ENCODE measurements at regions of chr1 and their contacts with region 1.

Region 1: GRCh38 chr1:64823691-64824476 is 79.0 kb downstream of the RAVER2 start:
- DNase-seq: peak in 1 of 2 donors; percentile 80
- H3K4me3 ChIP-seq: no peak overlapping the region
- H3K27ac ChIP-seq: no peak overlapping the region
- H3K4me1 ChIP-seq: no peaks in the 10 kb centered on the region
- H3K27me3 ChIP-seq: no peaks in the 10 kb centered on the region
- CTCF ChIP-seq: peak; percentile 69 to 79 (median 78)

Region 2: DNA sequence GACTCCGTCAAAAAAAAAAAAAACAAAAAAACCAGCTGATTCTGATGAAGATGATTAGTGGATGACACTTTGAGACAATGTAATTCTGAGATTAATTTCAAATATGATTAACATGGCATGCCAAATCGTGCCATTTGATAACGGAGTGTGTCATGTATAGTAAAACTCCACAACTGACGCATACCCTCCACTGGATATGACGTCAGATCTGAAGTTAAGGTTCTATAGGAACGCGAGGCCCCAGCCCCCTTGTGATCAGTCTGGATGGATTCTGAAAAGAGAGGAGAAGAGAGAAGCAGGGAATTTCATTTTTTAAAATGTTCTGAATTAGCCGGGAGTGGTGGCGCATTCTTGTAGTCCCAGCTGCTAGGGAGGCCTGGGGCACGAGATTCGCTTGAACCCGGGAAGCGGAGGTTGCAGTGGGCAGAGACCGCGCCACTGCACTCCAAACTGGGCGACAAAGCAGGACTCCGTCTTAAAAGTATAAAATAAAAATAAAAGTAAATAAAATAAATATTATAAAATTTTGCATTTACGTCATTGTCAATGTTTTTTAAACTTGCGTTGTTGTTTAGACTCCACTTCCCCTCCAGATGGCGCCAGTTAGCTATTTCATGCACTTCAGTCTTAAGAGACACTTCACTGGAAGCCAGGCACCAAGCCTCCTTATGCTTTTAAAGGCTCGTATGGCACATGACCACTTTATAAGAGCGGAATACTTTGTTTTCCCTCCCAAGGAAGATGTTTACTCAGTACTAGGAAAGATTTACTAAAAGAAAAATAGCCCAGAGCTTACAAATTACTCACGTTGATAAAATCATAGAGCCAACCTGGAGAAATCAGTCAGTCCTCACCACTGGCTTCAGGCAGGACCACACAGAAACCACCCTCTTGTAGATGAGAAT is 555.0 kb before region 1 on chr1:
- intact Hi-C with region 1: loop called (anchors 2 kb)
- DNase-seq: peak in 1 of 2 donors; percentile 72
- H3K4me3 ChIP-seq: no peak overlapping the region
- H3K27ac ChIP-seq: no peak overlapping the region
- H3K4me1 ChIP-seq: no peaks in the 10 kb centered on the region
- H3K27me3 ChIP-seq: no peaks in the 10 kb centered on the region
- CTCF ChIP-seq: peak; percentile 62 to 81 (median 79)

Region 3: DNA sequence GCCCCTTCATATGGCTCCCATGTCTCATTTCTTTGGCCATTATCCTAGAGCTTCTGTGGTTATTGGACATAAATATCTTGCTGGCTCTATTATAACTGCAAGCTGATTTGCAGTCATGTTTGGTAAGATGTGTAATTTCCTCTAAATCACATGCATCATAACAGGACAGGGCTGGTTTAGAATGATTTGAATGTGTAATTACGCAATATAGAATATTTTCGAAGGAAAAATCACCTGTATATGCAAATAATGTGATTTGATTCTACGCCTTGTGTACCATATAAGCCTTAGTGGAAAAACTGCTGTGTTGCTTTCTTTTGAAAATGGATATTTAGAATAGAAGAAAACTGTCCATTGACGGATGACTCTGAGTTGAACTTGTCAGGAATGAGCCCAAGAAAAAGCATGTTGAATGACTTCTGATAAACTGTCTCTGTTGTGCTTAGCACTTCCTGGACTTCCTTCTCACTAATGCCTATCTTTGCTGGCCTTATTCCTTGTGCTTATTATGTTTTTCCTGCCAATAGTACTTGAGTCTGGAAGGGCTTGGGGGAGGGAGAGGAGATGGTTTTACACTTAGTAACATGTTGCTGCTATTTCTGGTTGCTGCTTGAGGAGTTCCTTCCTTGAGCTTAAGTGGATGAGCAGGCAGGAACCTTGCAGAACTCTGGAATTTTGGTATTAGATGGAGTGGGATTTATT is 347.5 kb before region 1 on chr1:
- intact Hi-C with region 1: loop called (anchors 5 kb)
- DNase-seq: peak in 1 of 2 donors; percentile 71
- H3K4me3 ChIP-seq: no peak overlapping the region
- H3K27ac ChIP-seq: peak overlapping the region; percentile 24 to 47
- H3K4me1 ChIP-seq: peaks cover 7 to 33% of the 10 kb centered on the region in 2 donors
- H3K27me3 ChIP-seq: no peaks in the 10 kb centered on the region
- CTCF ChIP-seq: no peak

Region 4: GRCh38 chr1:64686828-64687724 is 136.8 kb before region 1 on chr1:
- intact Hi-C with region 1: loop called (anchors 1 kb)
- DNase-seq: no peak
- H3K4me3 ChIP-seq: no peak overlapping the region
- H3K27ac ChIP-seq: peak overlapping the region; percentile 25 to 37
- H3K4me1 ChIP-seq: peaks cover 0 to 2% of the 10 kb centered on the region in 2 donors
- H3K27me3 ChIP-seq: no peaks in the 10 kb centered on the region
- CTCF ChIP-seq: peak; percentile 66 to 90 (median 82)

Region 5: DNA sequence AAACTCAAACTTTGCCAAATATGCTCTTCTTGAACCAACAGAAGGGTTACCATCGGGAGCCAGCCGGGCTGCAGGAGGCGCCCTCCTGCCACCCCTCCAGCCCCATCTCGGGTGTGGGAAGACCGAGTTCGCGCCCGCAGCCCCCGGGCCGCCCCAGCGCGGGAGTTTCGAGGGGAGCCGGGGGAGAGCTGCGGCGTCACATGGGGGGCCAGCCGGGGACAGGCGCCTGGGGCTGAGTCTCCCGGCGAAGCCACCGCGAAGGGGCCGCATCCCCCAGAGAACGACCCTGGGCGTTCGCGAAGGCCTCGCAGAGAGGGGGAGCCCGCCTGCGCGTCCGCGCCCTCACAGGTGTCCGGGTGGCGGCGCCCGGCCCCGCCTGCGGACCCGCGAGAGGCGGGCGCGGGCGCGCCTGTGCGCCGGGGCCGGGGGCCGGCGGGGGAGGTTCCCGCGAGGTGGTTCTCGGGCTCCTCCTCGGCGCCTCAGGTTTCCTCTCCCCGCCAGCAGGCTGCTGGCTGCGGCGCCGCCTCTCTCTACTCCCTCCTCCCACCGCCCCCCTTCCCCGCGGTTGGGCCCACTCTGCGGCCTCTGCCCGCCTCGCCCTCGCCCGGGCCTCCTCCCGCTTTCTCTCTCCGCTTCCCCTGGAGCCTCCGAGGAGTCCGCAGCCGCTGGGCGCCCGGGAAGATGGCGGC is 79.2 kb before region 1 on chr1 and contains the start of gene RAVER2:
- intact Hi-C with region 1: loop called (anchors 2 kb)
- DNase-seq: peak; percentile 16 to 85
- H3K4me3 ChIP-seq: peak within 1 kb of the TSS; percentile 84 to 87
- H3K27ac ChIP-seq: peak within 1 kb of the TSS; percentile 86 to 90
- H3K4me1 ChIP-seq: peaks cover 0 to 20% of the 10 kb centered on the region in 2 donors
- H3K27me3 ChIP-seq: no peaks in the 10 kb centered on the region
- CTCF ChIP-seq: peak in 2 of 3 experiments; percentile 32 to 60
- total RNA-seq, gene RAVER2: 17.7 TPM